Endothelial cell of umbilical vein (primary cell): ENCODE measurements at regions of chr11 and their contacts with region 1.

Region 1: GRCh38 chr11:67507864-67508485 is at the start of gene CDK2AP2:
- DNase-seq: peak; percentile 99
- H3K4me3 ChIP-seq: peak within 1 kb of the TSS; percentile 52 to 62 (median 53)
- H3K27ac ChIP-seq: peak within 1 kb of the TSS; percentile 83
- H3K4me1 ChIP-seq: peaks cover 36% of the 10 kb centered on the region
- H3K27me3 ChIP-seq: no peaks in the 10 kb centered on the region
- CTCF ChIP-seq: no peak
- POLR2A ChIP-seq: peak; percentile 79
- total RNA-seq, gene CDK2AP2: 81.2 and 97.0 TPM in 2 replicates

Region 2: DNA sequence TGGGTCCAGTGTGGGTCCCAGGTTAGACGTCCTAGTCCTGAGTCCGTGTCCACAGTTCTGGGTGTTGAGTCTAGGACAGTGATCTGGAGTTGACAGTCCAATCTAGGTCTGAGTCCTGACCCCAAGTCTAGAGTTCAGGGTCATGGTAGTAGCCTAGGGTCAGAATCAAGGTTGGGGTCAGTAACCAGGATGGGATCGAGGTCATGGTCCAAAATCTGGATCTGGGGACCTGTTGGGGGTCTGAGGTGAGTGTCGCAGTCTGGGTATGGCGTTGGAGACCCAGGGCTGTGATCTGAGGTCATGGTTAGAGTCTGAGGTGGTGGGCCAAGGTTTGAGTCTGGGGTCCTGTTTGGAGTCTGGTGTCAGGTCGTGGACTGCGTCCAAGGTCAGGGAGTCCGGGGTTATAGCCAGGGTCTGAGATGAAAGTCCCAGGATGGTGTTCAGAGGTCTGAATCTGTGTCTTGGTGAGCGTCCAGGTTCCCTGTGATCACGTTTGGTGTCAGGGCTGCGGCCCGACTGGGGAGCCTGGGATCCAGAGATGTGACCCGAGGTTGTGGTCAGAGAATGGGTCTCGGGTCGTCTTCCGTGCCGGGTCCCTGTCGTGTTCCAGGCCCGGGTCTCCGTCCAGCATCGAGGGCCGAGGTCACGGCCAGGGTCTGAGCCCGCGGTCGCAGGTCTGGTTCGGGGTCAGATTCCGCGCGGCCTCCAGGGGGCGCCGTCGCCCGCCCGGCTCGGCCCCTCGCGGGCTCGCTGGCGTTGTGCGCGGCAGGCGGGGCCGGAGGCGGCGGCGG is 242.1 kb before region 1 on chr11:
- CTCF ChIA-PET with region 1: no interaction called
- POLR2A ChIA-PET with region 1: no interaction called
- dilution Hi-C with region 1: no loop called
- intact Hi-C with region 1: loop called (anchors 10 kb)
- DNase-seq: peak; percentile 45
- H3K4me3 ChIP-seq: no peak overlapping the region
- H3K27ac ChIP-seq: no peak overlapping the region
- H3K4me1 ChIP-seq: peaks cover 37% of the 10 kb centered on the region
- H3K27me3 ChIP-seq: no peaks in the 10 kb centered on the region
- CTCF ChIP-seq: peak; percentile 62 to 79
- POLR2A ChIP-seq: no peak

Region 3: DNA sequence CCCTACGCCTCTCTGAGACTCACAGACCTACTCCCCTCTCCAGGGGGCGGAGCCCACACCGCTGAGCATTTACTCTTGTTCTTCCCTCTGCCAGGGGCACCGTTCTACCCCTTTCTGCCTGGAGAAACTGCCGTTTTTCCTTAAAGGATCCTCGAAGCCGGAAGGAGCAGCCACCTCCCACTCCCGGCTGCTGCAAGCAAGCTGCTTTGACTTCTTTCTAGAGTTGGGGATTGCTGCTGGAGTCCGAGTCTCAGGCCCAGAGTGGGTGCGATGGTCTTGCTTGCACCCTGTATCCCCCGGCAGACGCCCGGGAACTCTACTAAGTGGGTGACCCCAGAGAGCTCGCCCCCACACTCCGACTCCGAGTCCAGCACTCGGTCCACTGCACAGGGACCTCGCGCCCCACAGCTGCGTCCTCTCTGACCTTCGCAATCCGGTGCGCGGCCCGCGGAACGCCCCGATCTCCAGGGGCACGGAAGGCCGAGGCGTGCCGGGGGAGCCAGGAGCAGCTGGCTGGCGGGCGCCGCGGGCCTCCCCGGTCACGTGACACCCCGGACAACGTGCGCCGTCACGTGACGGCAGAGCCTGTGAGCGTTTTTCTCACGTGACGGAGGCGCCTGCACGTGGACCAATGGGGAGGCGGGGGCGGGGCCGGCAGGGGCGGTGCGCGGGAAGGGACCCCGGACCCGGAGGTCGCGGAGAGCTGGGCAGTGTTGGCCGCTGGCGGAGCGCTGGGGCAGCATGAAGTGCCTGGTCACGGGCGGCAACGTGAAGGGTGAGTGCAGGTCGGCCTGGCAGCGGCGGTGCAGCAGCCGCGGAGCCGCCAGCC is 116.5 kb before region 1 on chr11 and contains the start of gene RAD9A:
- CTCF ChIA-PET with region 1: interaction called, 7 read pairs
- POLR2A ChIA-PET with region 1: interaction called, 4 read pairs
- dilution Hi-C with region 1: no loop called
- intact Hi-C with region 1: loop called (anchors 1 kb)
- DNase-seq: peak; percentile 90
- H3K4me3 ChIP-seq: peak within 1 kb of the TSS; percentile 68 to 80 (median 76)
- H3K27ac ChIP-seq: peak within 1 kb of the TSS; percentile 56
- H3K4me1 ChIP-seq: peaks cover 10% of the 10 kb centered on the region
- H3K27me3 ChIP-seq: no peaks in the 10 kb centered on the region
- CTCF ChIP-seq: no peak
- POLR2A ChIP-seq: peak; percentile 82
- total RNA-seq, gene RAD9A: 18.4 and 24.6 TPM in 2 replicates

Region 4: GRCh38 chr11:67428052-67428914 is 79.7 kb before region 1 on chr11 and contains the start of gene RPS6KB2:
- CTCF ChIA-PET with region 1: no interaction called
- POLR2A ChIA-PET with region 1: no interaction called
- dilution Hi-C with region 1: no loop called
- intact Hi-C with region 1: loop called (anchors 1 kb)
- DNase-seq: peak; percentile 98
- H3K4me3 ChIP-seq: peak within 1 kb of the TSS; percentile 46 to 91 (median 75)
- H3K27ac ChIP-seq: peak within 1 kb of the TSS; percentile 38
- H3K4me1 ChIP-seq: no peaks in the 10 kb centered on the region
- H3K27me3 ChIP-seq: no peaks in the 10 kb centered on the region
- CTCF ChIP-seq: no peak
- POLR2A ChIP-seq: peak; percentile 96
- total RNA-seq, gene RPS6KB2: 47.8 and 53.8 TPM in 2 replicates

Region 5: DNA sequence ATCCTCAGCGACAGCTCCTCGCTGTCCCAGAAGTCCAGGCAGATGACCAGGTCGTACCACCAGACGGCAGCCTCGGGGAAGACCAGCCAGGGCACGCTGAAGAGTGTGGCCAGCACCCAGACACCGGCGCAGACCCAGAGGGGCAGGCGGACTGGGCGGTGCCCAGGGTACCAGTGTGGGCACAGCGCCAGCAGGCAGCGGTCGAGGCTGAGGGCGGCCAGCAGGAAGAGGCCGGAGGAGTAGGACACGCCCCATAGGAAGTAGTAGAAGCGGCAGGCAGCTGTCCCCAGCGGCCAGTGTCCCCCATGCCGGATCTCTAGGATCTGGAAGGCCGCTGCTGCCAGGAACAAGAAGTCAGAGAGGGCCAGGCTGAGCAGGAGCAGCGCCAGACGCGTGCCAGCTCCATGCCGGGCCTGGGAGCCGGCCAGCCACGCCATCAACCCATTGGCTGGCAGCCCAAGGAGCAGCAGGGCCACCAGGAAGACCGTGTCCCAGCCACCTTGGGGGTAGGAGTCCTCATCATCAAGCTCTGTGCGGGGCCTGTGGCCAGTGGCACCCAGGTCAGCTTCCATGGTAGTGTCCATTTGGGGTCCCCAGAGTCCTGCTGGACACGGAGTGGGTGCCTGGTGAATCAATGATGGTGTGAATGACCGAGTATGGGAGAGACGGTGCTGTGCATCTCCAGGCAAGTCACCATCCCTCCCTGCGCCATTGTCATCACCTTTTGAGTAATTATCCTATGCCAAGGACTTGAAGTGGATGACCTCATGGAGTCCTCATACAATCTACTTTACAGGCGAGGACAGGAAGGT is 55.6 kb before region 1 on chr11 and contains the start of gene GPR152:
- CTCF ChIA-PET with region 1: interaction called, 3 read pairs
- POLR2A ChIA-PET with region 1: no interaction called
- dilution Hi-C with region 1: no loop called
- intact Hi-C with region 1: loop called (anchors 1 kb)
- DNase-seq: peak; percentile 32
- H3K4me3 ChIP-seq: peak within 1 kb of the TSS in 2 of 3 experiments; percentile 26 to 32
- H3K27ac ChIP-seq: no peak within 1 kb of the TSS
- H3K4me1 ChIP-seq: peaks cover 7% of the 10 kb centered on the region
- H3K27me3 ChIP-seq: no peaks in the 10 kb centered on the region
- CTCF ChIP-seq: peak; percentile 17 to 47
- POLR2A ChIP-seq: no peak
- total RNA-seq, gene GPR152: not detected in 2 replicates

Region 6: GRCh38 chr11:67482825-67483798 is 24.9 kb before region 1 on chr11 and contains the start of gene AIP:
- CTCF ChIA-PET with region 1: no interaction called
- POLR2A ChIA-PET with region 1: no interaction called
- dilution Hi-C with region 1: no loop called
- intact Hi-C with region 1: loop called (anchors 1 kb)
- DNase-seq: peak; percentile 98
- H3K4me3 ChIP-seq: peak within 1 kb of the TSS; percentile 29 to 72 (median 46)
- H3K27ac ChIP-seq: peak within 1 kb of the TSS; percentile 40
- H3K4me1 ChIP-seq: no peaks in the 10 kb centered on the region
- H3K27me3 ChIP-seq: no peaks in the 10 kb centered on the region
- CTCF ChIP-seq: peak in 1 of 2 donors; percentile 7
- POLR2A ChIP-seq: peak; percentile 73
- total RNA-seq, gene AIP: 46.3 and 46.5 TPM in 2 replicates

Region 7: DNA sequence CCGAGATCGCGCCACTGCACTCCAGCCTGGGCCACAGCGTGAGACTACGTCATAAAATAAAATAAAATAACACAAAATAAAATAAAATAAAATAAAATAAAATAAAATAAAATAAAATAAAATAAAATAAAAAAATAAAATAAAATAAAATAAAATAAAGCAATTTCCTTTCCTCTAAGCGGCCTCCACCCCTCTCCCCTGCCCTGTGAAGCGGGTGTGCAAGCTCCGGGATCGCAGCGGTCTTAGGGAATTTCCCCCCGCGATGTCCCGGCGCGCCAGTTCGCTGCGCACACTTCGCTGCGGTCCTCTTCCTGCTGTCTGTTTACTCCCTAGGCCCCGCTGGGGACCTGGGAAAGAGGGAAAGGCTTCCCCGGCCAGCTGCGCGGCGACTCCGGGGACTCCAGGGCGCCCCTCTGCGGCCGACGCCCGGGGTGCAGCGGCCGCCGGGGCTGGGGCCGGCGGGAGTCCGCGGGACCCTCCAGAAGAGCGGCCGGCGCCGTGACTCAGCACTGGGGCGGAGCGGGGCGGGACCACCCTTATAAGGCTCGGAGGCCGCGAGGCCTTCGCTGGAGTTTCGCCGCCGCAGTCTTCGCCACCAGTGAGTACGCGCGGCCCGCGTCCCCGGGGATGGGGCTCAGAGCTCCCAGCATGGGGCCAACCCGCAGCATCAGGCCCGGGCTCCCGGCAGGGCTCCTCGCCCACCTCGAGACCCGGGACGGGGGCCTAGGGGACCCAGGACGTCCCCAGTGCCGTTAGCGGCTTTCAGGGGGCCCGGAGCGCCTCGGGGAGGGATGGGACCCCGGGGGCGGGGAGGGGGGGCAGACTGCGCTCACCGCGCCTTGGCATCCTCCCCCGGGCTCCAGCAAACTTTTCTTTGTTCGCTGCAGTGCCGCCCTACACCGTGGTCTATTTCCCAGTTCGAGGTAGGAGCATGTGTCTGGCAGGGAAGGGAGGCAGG is 75.6 kb after region 1 on chr11 and contains the start of gene GSTP1:
- CTCF ChIA-PET with region 1: no interaction called
- POLR2A ChIA-PET with region 1: no interaction called
- dilution Hi-C with region 1: no loop called
- intact Hi-C with region 1: loop called (anchors 1 kb)
- DNase-seq: peak; percentile 94
- H3K4me3 ChIP-seq: peak within 1 kb of the TSS; percentile 68 to 85 (median 83)
- H3K27ac ChIP-seq: peak within 1 kb of the TSS; percentile 63
- H3K4me1 ChIP-seq: peaks cover 17% of the 10 kb centered on the region
- H3K27me3 ChIP-seq: peaks cover 2 to 4% of the 10 kb centered on the region in 2 experiments
- CTCF ChIP-seq: peak; percentile 68 to 84
- POLR2A ChIP-seq: peak; percentile 99
- total RNA-seq, gene GSTP1: 962 and 997 TPM in 2 replicates